Caco-2 (cell line): ENCODE measurements at regions of chr9 and their contacts with region 1.

Region 1: DNA sequence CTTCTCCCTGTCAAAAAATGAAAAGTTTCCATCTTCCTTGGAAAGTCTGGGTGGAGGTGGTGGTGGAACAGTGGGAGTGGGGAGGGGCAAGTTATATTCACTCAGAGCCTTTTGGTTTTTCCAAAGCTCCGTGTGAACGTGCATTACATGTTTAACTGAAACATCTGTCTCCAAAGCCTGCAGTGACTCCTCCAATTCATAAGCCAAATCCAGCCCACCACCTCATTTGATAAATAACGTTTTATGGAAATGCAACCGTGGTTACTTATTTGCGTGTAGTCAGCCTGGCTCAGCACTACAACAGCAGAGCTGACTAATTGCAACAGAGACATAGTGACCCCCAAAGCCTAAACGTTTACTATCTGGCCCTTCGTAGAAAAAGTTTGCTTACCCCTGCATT is 13.9 kb downstream of the TNFSF8 start:
- DNase-seq: no peak
- H3K4me3 ChIP-seq: no peak overlapping the region
- H3K4me3 Mint-ChIP-seq: no peak overlapping the region
- H3K27ac Mint-ChIP-seq: no peak overlapping the region
- H3K4me1 ChIP-seq: no peaks in the 10 kb centered on the region
- H3K4me1 Mint-ChIP-seq: no peaks in the 10 kb centered on the region
- H3K27me3 ChIP-seq: no peaks in the 10 kb centered on the region
- H3K27me3 Mint-ChIP-seq: peaks cover 2% of the 10 kb centered on the region
- CTCF ChIP-seq: no peak

Region 2: GRCh38 chr9:114759512-114760341 is 156.8 kb before region 1 on chr9:
- CTCF ChIA-PET with region 1: no interaction called
- POLR2A ChIA-PET with region 1: no interaction called
- intact Hi-C with region 1: no loop called
- DNase-seq: no peak
- H3K4me3 ChIP-seq: no peak overlapping the region
- H3K4me3 Mint-ChIP-seq: no peak overlapping the region
- H3K27ac Mint-ChIP-seq: no peak overlapping the region
- H3K4me1 ChIP-seq: no peaks in the 10 kb centered on the region
- H3K4me1 Mint-ChIP-seq: no peaks in the 10 kb centered on the region
- H3K27me3 ChIP-seq: no peaks in the 10 kb centered on the region
- H3K27me3 Mint-ChIP-seq: peaks cover 7% of the 10 kb centered on the region
- CTCF ChIP-seq: no peak

Region 3: GRCh38 chr9:114930056-114930812 is 13.8 kb after region 1 on chr9 and contains the start of gene TNFSF8:
- CTCF ChIA-PET with region 1: no interaction called
- POLR2A ChIA-PET with region 1: no interaction called
- intact Hi-C with region 1: loop called (anchors 1 kb)
- DNase-seq: no peak
- H3K4me3 ChIP-seq: no peak within 1 kb of the TSS
- H3K4me3 Mint-ChIP-seq: no peak within 1 kb of the TSS
- H3K27ac Mint-ChIP-seq: no peak within 1 kb of the TSS
- H3K4me1 ChIP-seq: peaks cover 23% of the 10 kb centered on the region; the same call in 1 of the 2 replicates
- H3K4me1 Mint-ChIP-seq: peaks cover 14% of the 10 kb centered on the region
- H3K27me3 ChIP-seq: no peaks in the 10 kb centered on the region; the same call in 1 of the 2 replicates
- H3K27me3 Mint-ChIP-seq: no peaks in the 10 kb centered on the region
- CTCF ChIP-seq: no peak
- total RNA-seq, gene TNFSF8: 0.20 TPM in 1 of 2 replicates, not detected in the other